ENCODE measurements at regions of chr9 and their contacts with region 1.

Region 1: GRCh38 chr9:70080481-70081119 is 37.0 kb downstream of the MAMDC2 start:
- DNase-seq: peak in 4 of 5 donors; percentile 40 to 54 (median 51)
- ATAC-seq: peak; percentile 85 to 93 (median 90)
- H3K4me3 ChIP-seq: no peak overlapping the region
- H3K27ac ChIP-seq: peak overlapping the region in 10 of 12 donors; percentile 25 to 92 (median 68)
- H3K4me1 ChIP-seq: peaks cover 0 to 60% (median 20%) of the 10 kb centered on the region in 12 donors
- H3K27me3 ChIP-seq: no peaks in the 10 kb centered on the region
- CTCF ChIP-seq: no peak
- POLR2A ChIP-seq: no peak

Region 2: DNA sequence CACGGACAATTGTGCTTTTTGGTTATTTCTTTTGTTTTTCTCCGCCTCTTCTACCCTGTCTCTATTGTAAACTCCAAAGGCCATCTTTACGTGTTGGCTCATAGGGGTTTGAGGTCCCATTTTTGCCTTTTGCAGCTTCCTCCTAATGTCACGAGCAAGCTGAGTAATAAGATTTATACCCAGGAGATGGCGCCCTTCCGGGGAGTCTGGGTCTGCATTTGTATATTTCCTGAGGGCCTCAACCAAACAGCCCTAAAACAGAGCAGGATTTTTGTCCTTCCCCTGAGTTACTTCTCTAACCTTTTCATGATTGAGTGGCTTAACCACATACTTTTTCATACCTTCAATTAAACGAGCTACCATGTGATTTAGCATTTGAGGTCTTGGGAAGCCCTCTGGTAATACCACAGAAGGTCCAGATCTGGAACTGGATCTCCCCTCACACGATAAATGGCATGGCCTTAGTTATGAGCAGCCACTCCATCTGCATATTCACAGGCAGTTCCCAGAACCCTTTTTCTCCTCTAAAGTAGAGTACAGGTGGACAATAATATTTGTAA is 271.2 kb before region 1 on chr9:
- intact Hi-C with region 1: loop called in 1 of 10 experiments (anchors 10 kb)
- DNase-seq: no peak
- ATAC-seq: no peak
- H3K4me3 ChIP-seq: no peak overlapping the region
- H3K27ac ChIP-seq: no peak overlapping the region
- H3K4me1 ChIP-seq: peaks cover 0 to 26% (median 3%) of the 10 kb centered on the region in 12 donors
- H3K27me3 ChIP-seq: peaks cover 0 to 3% (median 0%) of the 10 kb centered on the region in 9 donors
- CTCF ChIP-seq: peak in 2 of 12 donors; percentile 5 to 9
- POLR2A ChIP-seq: no peak

Region 3: DNA sequence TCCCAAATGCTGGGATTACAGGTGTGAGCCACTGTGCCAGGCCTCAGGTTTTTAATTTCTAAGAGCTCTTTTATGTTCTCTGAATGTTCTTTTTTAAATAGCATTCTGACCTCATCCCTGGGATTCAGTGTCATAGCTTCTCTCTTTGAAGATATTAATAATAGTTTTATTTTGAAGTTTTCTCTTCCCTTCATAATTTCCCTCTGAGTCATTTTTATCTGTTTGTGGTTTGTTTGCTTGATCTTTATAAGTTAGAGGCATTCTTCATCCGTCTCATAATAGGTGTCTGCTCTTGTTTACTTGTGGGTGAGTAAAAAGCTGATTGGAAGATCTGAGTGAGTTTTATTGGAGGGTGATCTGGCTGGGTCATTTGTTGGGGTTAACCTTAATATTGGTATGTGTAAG is 49.5 kb before region 1 on chr9:
- intact Hi-C with region 1: loop called in 1 of 10 experiments (anchors 10 kb)
- DNase-seq: no peak
- ATAC-seq: no peak
- H3K4me3 ChIP-seq: no peak overlapping the region
- H3K27ac ChIP-seq: no peak overlapping the region
- H3K4me1 ChIP-seq: no peaks in the 10 kb centered on the region
- H3K27me3 ChIP-seq: no peaks in the 10 kb centered on the region
- CTCF ChIP-seq: no peak
- POLR2A ChIP-seq: no peak

Region 4: DNA sequence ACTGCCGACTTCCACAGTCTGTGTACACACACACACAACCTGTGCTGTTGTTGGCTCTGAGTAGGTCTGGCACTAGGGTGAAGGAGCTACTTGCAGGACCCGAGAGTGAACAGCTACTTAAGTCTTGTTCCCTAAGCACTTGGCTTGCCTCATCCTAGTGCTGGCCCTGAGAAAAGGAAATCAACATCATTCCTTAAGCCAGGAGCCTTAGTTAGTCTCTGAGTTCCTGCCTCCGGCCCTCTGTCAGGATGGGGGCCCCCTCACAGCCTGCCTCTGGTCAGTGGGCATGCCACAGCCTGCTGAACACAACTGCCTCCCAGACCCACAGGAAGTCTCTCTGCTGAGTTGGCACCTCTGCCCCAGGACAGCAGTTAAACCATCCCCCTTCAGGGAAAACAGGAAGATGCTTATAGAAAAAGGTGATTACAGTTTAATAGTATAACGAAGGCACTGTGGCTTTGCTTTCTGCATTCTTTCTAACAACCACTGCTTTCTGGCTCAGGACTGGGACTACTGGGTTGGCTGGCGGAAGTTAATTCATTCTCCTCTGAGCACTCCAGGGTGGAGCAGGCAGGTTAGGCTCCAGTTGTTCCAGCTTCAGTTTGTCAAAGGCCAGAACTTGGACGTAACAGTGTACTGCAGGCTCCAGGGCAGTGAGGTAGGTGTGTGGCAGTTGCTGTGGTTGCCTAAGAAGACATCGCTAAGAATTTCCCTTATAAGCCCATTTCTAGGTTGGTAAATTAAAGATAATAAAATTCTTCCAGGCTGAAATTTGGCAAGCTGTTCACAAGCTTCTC is 34.1 kb before region 1 on chr9:
- intact Hi-C with region 1: no loop called
- DNase-seq: peak in 2 of 5 donors; percentile 33 to 51
- ATAC-seq: no peak
- H3K4me3 ChIP-seq: peak overlapping the region in 6 of 12 donors; percentile 5 to 78 (median 36)
- H3K27ac ChIP-seq: peak overlapping the region in 11 of 12 donors; percentile 7 to 92 (median 54)
- H3K4me1 ChIP-seq: peaks cover 0 to 65% (median 42%) of the 10 kb centered on the region in 12 donors
- H3K27me3 ChIP-seq: peaks cover 0 to 8% (median 0%) of the 10 kb centered on the region in 9 donors
- CTCF ChIP-seq: no peak
- POLR2A ChIP-seq: no peak

Measured in heart left ventricle (tissue), 16 donors.